ENCODE measurements at regions of chr15 and their contacts with region 1.

Region 1: DNA sequence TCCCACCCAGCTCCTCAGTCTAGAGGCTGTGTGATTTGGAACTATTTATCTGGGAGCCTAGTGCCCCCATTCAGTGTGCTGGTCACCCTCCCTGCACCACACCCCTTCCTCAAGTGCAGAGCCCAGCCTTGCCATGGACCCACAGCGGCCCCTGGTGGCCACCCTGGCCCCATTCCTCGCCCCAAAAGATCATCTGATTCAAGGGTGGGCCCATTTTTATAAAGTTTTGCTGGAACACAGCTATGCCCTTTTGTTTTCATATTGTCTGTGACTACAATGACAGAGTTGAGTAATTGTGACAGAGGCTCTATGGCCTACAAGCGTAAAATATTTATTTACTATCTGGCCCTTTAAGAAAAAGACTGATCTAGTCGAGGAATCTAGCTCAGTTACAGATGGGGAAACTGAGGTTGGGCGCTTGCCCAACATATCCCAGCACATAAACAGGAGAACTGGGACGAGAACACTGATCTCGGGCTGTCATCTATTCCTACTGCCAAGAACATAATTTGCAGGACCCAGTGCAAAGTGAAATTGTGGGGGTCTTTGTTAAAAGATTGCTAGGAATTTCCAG is 1.8 kb downstream of the FES start:
- DNase-seq: peak; percentile 88
- H3K4me3 Mint-ChIP-seq: no peak overlapping the region
- H3K27ac Mint-ChIP-seq: peak overlapping the region; percentile 13
- H3K4me1 Mint-ChIP-seq: peaks cover 26% of the 10 kb centered on the region
- H3K27me3 Mint-ChIP-seq: peaks cover 3% of the 10 kb centered on the region

Region 2: GRCh38 chr15:90648137-90649070 is 237.7 kb before region 1 on chr15:
- CTCF ChIA-PET with region 1: interaction called, 69 read pairs
- intact Hi-C with region 1: loop called (anchors 1 kb)
- DNase-seq: peak; percentile 82
- H3K4me3 Mint-ChIP-seq: peak overlapping the region; percentile 58
- H3K27ac Mint-ChIP-seq: peak overlapping the region; percentile 91
- H3K4me1 Mint-ChIP-seq: peaks cover 30% of the 10 kb centered on the region
- H3K27me3 Mint-ChIP-seq: peaks cover 4% of the 10 kb centered on the region

Region 3: GRCh38 chr15:90709278-90709677 is 176.8 kb before region 1 on chr15:
- CTCF ChIA-PET with region 1: interaction called, 10 read pairs
- intact Hi-C with region 1: no loop called
- DNase-seq: no peak
- H3K4me3 Mint-ChIP-seq: no peak overlapping the region
- H3K27ac Mint-ChIP-seq: no peak overlapping the region
- H3K4me1 Mint-ChIP-seq: peaks cover 9% of the 10 kb centered on the region
- H3K27me3 Mint-ChIP-seq: no peaks in the 10 kb centered on the region

Region 4: GRCh38 chr15:90762109-90762508 is 124.0 kb before region 1 on chr15:
- CTCF ChIA-PET with region 1: interaction called, 11 read pairs
- intact Hi-C with region 1: no loop called
- DNase-seq: no peak
- H3K4me3 Mint-ChIP-seq: no peak overlapping the region
- H3K27ac Mint-ChIP-seq: no peak overlapping the region
- H3K4me1 Mint-ChIP-seq: no peaks in the 10 kb centered on the region
- H3K27me3 Mint-ChIP-seq: no peaks in the 10 kb centered on the region

Region 5: DNA sequence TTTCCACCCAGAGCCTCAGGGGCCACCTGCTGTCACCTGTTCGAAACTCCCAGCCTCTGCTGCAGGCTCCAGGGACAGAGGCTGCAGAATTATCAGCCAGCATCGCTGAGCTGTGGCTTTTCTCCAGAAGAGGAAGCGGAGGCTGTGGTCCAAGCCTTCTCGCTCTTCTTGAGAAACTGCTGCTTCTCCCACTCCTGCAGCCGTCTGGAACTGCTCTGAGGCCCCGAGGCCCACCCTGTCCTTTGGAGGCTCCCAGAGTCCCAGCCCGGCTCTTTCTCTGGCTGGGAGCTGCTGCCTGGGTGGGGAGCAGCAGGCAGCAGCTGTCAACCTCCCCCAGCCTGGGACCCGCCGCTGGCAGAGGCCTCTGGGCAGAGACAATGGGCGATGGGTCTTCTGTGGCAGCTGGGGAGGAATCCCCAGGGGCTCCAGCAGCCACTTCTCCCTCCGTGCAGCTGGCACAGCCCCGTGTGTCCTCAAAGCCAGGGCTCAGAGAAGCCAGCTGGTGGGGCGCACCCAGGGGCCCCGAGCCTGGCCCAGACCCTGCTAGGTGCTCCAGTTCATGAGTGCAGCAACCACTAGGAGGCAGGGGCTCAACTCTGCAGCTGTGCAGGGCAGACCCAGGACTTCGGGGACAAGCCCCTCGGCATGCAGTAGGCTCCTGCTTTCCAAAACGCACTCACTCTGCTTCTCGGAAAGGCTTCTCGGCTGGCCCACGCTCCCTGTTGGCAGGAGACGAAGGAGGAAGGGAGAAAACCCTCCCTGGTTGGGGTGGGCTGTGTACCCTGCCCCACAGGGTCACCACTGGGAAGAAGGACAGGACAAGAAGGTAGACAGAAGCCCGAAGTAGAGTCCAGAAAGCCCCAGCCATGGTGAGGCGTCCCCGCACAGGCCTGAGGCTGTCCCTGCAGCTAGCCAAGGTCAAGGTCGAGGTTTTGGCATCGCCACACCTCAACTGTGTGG is 67.6 kb before region 1 on chr15:
- CTCF ChIA-PET with region 1: interaction called, 16 read pairs
- intact Hi-C with region 1: no loop called
- DNase-seq: peak; percentile 41
- H3K4me3 Mint-ChIP-seq: no peak overlapping the region
- H3K27ac Mint-ChIP-seq: peak overlapping the region; percentile 61
- H3K4me1 Mint-ChIP-seq: peaks cover 26% of the 10 kb centered on the region
- H3K27me3 Mint-ChIP-seq: no peaks in the 10 kb centered on the region

Region 6: DNA sequence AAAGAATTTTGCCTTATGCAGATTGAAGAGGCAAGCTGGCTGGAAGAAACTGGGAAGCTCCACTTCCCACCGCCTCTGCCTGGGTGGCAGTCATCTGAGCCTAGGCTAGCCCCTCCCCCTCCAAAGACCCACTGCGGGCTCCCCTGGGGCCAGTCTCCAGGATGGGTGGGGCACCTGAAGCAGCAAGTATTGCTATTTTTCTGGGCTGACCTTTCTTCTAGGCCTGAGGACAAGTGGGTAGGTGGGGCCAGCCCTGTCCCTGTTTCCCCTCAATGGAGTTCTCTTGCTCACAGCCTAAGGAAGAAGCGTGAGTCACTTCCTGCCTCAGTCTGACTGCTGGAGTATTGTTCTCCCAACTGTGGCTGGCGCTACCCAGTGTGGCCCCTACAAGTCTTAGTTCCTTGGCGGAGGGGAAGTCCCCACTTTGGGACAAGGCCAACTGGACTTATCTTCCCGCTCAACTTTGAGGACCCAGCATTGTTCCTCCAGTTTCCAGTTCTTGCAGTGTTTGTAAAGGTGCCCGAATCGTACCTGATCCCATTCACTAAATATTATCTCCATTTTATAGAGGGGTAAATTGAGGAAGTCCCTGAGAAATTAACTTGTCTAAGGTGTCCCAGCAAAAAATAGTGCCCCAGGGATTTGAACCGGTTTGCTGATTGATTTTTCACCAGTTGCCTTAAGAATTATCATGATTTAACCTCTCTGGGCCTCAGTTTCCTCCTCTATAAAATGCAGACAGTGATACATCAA is 16.4 kb before region 1 on chr15:
- CTCF ChIA-PET with region 1: interaction called, 13 read pairs
- intact Hi-C with region 1: loop called (anchors 1 kb)
- DNase-seq: peak; percentile 87
- H3K4me3 Mint-ChIP-seq: peak overlapping the region; percentile 93
- H3K27ac Mint-ChIP-seq: peak overlapping the region; percentile 99
- H3K4me1 Mint-ChIP-seq: peaks cover 46% of the 10 kb centered on the region
- H3K27me3 Mint-ChIP-seq: no peaks in the 10 kb centered on the region